ENCODE measurements at regions of chr12 and their contacts with region 1.

Region 1: GRCh38 chr12:64099397-64099796 is 122.7 kb downstream of the KICS2 start:
- DNase-seq: peak; percentile 83
- H3K4me3 ChIP-seq: no peak overlapping the region
- H3K27ac ChIP-seq: peak overlapping the region; percentile 56 to 83 (median 78)
- H3K4me1 ChIP-seq: peaks cover 0 to 32% (median 26%) of the 10 kb centered on the region in 4 donors
- H3K27me3 ChIP-seq: no peaks in the 10 kb centered on the region
- CTCF ChIP-seq: no peak
- EP300 ChIP-seq: peak in 2 of 4 donors; percentile 58 to 71
- POLR2A ChIP-seq: no peak

Region 2: DNA sequence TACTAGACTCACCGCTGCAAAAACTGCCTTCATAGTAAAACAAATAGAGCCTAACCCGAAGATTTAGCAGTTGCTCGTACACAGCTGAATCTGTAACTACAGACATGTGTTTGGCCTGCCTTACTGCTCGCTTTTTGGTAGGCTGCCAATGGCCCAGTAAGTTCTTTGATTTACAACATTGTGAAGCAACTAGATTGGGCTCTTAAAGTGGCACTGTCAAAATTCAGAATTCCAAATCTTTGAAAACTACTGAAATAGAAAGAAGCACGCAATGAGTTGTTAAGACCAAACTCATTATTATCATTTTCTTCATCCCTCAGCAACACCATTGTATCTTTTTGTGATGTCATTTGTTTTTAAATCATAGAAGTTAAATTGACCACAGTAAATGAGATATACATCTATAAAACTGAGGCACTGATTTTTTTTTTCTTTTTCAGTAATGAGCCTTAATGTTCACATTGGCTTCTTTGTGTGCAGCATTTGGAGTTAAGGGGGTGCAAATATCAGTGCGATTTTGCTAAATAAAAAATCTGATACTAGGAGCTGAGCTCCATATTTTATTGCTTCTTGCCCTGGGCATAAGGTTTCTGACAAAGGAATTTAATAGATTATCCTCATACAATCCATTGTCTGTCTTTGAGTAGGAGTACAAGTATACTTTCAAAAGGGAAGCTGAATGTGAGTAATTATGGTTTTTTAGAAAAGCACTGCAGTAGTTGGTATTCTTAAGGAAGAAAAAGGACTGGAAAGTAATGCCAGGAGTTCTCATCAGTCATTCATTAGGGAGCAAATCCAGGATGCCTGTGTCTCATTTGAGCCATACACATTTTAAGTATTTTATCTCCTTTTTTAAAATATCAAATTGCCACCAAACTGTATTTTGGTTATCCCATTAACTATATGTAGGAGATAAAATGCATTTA is 15.8 kb before region 1 on chr12:
- intact Hi-C with region 1: loop called (anchors 2 kb)
- DNase-seq: peak; percentile 94
- H3K4me3 ChIP-seq: peak overlapping the region in 1 of 4 donors; percentile 7
- H3K27ac ChIP-seq: peak overlapping the region; percentile 67 to 83 (median 77)
- H3K4me1 ChIP-seq: peaks cover 0 to 63% (median 46%) of the 10 kb centered on the region in 4 donors
- H3K27me3 ChIP-seq: no peaks in the 10 kb centered on the region
- CTCF ChIP-seq: no peak
- EP300 ChIP-seq: peak in 1 of 4 donors; percentile 34
- POLR2A ChIP-seq: no peak

Region 3: DNA sequence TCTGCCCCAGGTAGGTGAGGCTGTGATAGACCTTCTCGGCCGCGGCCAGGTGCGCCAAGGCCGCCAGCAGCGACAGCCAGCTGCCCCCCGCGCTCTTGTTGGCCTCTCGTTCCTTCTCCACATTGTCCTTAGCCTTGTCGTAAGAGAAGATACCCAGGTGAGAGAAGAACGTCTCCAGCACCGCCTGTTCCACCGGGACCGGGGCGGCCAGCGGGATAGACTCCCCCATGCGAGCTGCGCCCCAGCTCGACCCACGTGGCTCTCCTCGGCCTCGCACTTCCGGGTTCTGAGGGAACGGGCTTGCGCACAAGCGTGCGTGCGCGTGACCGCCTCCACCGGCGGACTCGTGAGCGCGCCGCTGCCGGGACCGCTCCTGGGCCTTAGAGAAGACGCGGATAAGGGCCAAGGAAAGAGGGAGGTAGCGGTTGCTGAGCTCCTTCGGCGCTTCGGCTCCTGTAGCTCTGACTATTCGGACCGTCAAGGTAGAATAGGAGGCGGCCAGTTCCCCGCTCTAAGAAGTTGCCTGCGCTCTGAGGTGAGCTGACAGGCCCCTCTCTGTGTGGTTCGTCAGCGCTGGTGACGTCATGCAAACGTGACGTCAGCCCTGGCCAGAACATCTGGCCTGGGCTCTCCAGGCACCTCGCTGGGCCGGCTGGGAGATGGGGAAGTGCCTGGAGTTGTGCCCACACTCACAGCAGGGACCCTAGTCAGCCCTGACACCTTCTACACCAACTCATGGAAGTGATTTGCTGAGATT is 122.8 kb after region 1 on chr12 and contains the start of gene KICS2:
- intact Hi-C with region 1: loop called (anchors 5 kb)
- DNase-seq: peak; percentile 96
- H3K4me3 ChIP-seq: peak within 1 kb of the TSS; percentile 71 to 92 (median 80)
- H3K27ac ChIP-seq: peak within 1 kb of the TSS; percentile 90 to 93 (median 91)
- H3K4me1 ChIP-seq: peaks cover 0 to 10% (median 4%) of the 10 kb centered on the region in 4 donors
- H3K27me3 ChIP-seq: no peaks in the 10 kb centered on the region
- CTCF ChIP-seq: no peak
- EP300 ChIP-seq: no peak
- POLR2A ChIP-seq: peak; percentile 74 to 84
- total RNA-seq, gene KICS2: 3.6 to 10.7 (median 7.7) TPM

Region 4: DNA sequence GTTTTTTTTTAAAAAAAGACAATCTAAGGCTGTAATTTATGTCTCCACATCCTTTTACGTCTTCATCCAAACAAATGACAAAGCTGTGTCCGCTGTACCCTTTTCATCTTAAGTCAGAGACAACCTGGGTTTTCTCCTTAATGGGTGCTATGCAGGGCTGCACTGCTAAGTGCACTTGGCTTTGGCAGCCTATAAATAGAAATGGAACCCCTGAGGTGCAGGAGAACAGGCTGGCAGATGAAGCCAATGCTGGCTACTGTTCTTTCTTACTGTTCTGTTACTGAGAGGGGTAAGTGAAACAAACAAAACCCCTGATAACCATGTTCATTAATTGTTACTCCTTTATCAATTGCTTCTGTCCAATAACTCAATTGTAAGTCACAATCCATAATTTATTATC is 169.8 kb after region 1 on chr12:
- intact Hi-C with region 1: no loop called
- DNase-seq: no peak
- H3K4me3 ChIP-seq: no peak overlapping the region
- H3K27ac ChIP-seq: no peak overlapping the region
- H3K4me1 ChIP-seq: no peaks in the 10 kb centered on the region
- H3K27me3 ChIP-seq: no peaks in the 10 kb centered on the region
- CTCF ChIP-seq: no peak
- EP300 ChIP-seq: no peak
- POLR2A ChIP-seq: no peak

Region 5: GRCh38 chr12:64403707-64404469 is 304.5 kb after region 1 on chr12 and contains the start of gene XPOT:
- intact Hi-C with region 1: loop called (anchors 10 kb)
- DNase-seq: peak; percentile 97
- H3K4me3 ChIP-seq: peak within 1 kb of the TSS; percentile 85 to 97 (median 94)
- H3K27ac ChIP-seq: peak within 1 kb of the TSS; percentile 96 to 100 (median 98)
- H3K4me1 ChIP-seq: peaks cover 0 to 21% (median 11%) of the 10 kb centered on the region in 4 donors
- H3K27me3 ChIP-seq: no peaks in the 10 kb centered on the region
- CTCF ChIP-seq: no peak
- EP300 ChIP-seq: peak in 2 of 4 donors; percentile 39 to 62
- POLR2A ChIP-seq: no peak
- total RNA-seq, gene XPOT: 26.9 to 33.4 (median 30.1) TPM

Measured in sigmoid colon (tissue), 7 donors.